ENCODE measurements at regions of chr11 and their contacts with region 1.

Region 1: GRCh38 chr11:32273931-32274330 is 161.4 kb downstream of the WT1 start:
- DNase-seq: no peak
- H3K4me3 ChIP-seq: no peak overlapping the region
- H3K27ac ChIP-seq: no peak overlapping the region
- H3K4me1 ChIP-seq: peaks cover 15% of the 10 kb centered on the region
- H3K27me3 ChIP-seq: no peaks in the 10 kb centered on the region
- CTCF ChIP-seq: no peak

Region 2: GRCh38 chr11:31987118-31988005 is 286.6 kb before region 1 on chr11:
- CTCF ChIA-PET with region 1: no interaction called
- POLR2A ChIA-PET with region 1: no interaction called
- intact Hi-C with region 1: no loop called
- DNase-seq: peak; percentile 60
- H3K4me3 ChIP-seq: peak overlapping the region; percentile 12
- H3K27ac ChIP-seq: no peak overlapping the region
- H3K4me1 ChIP-seq: no peaks in the 10 kb centered on the region
- H3K27me3 ChIP-seq: peaks cover 92% of the 10 kb centered on the region
- CTCF ChIP-seq: no peak

Region 3: GRCh38 chr11:32840587-32840986 is 566.7 kb after region 1 on chr11:
- CTCF ChIA-PET with region 1: no interaction called
- POLR2A ChIA-PET with region 1: interaction called, 12 read pairs
- intact Hi-C with region 1: no loop called
- DNase-seq: no peak
- H3K4me3 ChIP-seq: no peak overlapping the region
- H3K27ac ChIP-seq: no peak overlapping the region
- H3K4me1 ChIP-seq: peaks cover 11% of the 10 kb centered on the region
- H3K27me3 ChIP-seq: no peaks in the 10 kb centered on the region
- CTCF ChIP-seq: no peak

Measured in A673 (cell line).